Left lung (tissue), 14 donors: ENCODE measurements at regions of chr17 and their contacts with region 1.

Region 1: GRCh38 chr17:27805520-27806146 is 5.3 kb upstream of the NOS2 start:
- DNase-seq: peak; percentile 72 to 89 (median 82)
- ATAC-seq: peak; percentile 99
- H3K4me3 ChIP-seq: peak overlapping the region in 1 of 2 donors; percentile 25
- H3K27ac ChIP-seq: peak overlapping the region in 1 of 2 donors; percentile 43
- H3K4me1 ChIP-seq: peaks cover 5 to 17% of the 10 kb centered on the region in 2 donors
- H3K27me3 ChIP-seq: no peaks in the 10 kb centered on the region
- CTCF ChIP-seq: peak; percentile 74 to 83

Region 2: DNA sequence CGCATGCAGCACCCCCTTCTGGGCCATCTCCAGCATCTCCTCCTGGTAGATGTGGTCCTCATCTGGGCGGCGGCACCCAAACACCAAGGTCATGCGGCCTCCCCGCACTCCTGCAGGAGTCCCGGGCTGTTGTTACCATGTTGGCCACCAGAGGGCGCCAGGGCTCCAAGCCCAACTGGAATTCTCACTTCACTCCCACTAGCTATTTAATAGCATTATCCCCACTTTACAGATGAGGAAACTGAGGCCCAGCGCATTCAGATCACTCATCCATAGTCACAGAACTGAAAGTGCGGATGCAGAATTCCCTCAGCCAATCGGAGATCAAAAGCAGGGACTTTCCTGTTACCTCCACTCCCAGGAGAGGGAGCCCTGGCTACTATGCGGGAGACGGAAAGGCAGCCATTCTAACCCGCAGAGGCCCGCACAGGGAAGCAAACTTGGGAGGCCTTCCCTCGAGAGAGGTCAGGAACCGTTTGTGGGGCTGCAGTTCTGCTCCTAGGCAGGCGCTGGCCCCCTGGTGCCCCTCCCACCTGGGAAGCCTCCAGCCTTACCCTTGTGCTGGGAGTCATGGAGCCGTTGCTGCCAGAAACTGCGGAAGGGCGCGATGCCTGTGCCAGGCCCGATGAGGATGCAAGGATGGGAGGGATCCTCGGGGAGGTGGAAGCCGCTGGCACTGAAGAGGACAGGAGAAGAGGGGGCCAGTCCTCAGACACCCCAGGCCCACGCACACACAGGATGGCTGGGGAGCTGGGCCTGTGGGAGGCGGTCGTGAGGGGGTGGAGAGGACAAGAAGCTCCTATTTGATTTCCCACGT is 45.4 kb before region 1 on chr17:
- intact Hi-C with region 1: no loop called
- DNase-seq: peak in 3 of 4 donors; percentile 34 to 93 (median 65)
- ATAC-seq: peak; percentile 77
- H3K4me3 ChIP-seq: no peak overlapping the region
- H3K27ac ChIP-seq: no peak overlapping the region
- H3K4me1 ChIP-seq: peaks cover 0 to 4% of the 10 kb centered on the region in 2 donors
- H3K27me3 ChIP-seq: no peaks in the 10 kb centered on the region
- CTCF ChIP-seq: peak; percentile 90 to 96

Region 3: DNA sequence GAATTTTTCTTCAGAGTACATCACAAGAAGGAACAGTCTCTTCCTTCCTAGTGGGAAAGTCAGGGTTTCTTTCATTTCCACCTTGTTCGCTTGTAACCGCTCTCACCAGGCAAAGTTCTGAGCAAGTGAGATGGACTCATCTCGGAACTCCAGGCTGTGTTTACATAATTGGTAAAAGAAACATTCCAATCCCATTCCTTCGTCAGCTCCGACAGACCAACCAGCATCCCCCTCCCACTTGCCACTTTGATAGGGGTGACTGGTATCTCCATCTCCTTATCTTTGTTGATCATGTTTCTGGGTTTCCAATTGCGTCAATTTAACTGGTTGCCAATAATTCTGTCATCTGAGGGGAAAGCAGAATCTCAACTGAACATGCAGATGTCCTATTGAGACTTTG is 124.4 kb after region 1 on chr17:
- intact Hi-C with region 1: no loop called
- DNase-seq: no peak
- ATAC-seq: no peak
- H3K4me3 ChIP-seq: no peak overlapping the region
- H3K27ac ChIP-seq: no peak overlapping the region
- H3K4me1 ChIP-seq: no peaks in the 10 kb centered on the region
- H3K27me3 ChIP-seq: no peaks in the 10 kb centered on the region
- CTCF ChIP-seq: no peak

Region 4: GRCh38 chr17:28252436-28252835 is 446.8 kb after region 1 on chr17:
- intact Hi-C with region 1: loop called in 1 of 2 experiments (anchors 5 kb)
- DNase-seq: no peak
- ATAC-seq: no peak
- H3K4me3 ChIP-seq: no peak overlapping the region
- H3K27ac ChIP-seq: no peak overlapping the region
- H3K4me1 ChIP-seq: peaks cover 0 to 7% of the 10 kb centered on the region in 2 donors
- H3K27me3 ChIP-seq: peaks cover 0 to 43% of the 10 kb centered on the region in 2 donors
- CTCF ChIP-seq: no peak